Endothelial cell of umbilical vein (primary cell): ENCODE measurements at regions of chr4 and their contacts with region 1.

Region 1: GRCh38 chr4:185839194-185839712 is 27.3 kb upstream of the SORBS2 start:
- DNase-seq: peak; percentile 95
- H3K4me3 ChIP-seq: no peak overlapping the region
- H3K27ac ChIP-seq: peak overlapping the region; percentile 77
- H3K4me1 ChIP-seq: peaks cover 36% of the 10 kb centered on the region
- H3K27me3 ChIP-seq: no peaks in the 10 kb centered on the region
- CTCF ChIP-seq: no peak
- POLR2A ChIP-seq: no peak

Region 2: GRCh38 chr4:185665655-185666054 is 173.6 kb before region 1 on chr4:
- CTCF ChIA-PET with region 1: no interaction called
- POLR2A ChIA-PET with region 1: no interaction called
- dilution Hi-C with region 1: no loop called
- intact Hi-C with region 1: no loop called
- DNase-seq: no peak
- H3K4me3 ChIP-seq: no peak overlapping the region
- H3K27ac ChIP-seq: no peak overlapping the region
- H3K4me1 ChIP-seq: no peaks in the 10 kb centered on the region
- H3K27me3 ChIP-seq: no peaks in the 10 kb centered on the region
- CTCF ChIP-seq: no peak
- POLR2A ChIP-seq: no peak

Region 3: DNA sequence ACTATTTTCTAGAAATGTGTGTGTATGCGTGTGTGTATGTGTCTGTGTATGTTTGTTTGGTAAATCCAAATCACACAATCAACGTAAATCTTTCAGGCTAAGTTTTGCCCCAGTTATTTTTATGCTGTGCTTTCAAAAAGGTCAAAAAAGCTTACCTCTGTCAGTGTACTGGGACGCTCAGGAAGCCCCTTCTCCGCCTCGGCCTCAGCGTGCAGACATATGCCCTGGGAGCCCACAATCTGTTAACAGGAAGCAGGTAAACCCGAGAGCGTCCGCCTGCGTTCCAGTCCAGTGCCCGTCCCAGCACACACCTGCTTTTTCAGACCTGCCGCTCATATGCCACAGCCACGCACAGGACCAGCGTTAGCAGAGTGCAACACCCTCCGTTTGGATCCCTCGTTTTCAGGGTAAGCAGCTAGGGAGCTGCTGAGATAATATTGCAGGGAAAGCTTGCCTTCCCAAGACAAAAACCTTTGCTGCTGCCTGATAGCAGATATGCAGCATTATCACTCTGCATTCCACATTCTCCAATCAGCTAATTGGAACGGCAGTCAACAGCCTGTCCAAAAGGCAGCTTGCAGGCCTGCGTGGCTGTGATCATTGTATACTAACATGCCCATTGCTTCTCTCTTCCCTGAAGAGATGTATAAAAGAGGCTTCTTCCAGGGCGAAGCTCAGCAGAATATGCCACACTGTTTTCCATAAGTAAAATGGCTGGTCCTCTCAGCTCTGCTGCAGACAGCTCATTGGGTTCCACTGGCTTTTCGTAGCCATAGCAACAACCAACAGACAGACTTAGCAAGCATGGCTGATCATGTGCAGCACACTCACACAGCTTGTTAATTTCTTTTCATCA is 27.5 kb before region 1 on chr4 and contains the start of gene SORBS2:
- CTCF ChIA-PET with region 1: no interaction called
- POLR2A ChIA-PET with region 1: no interaction called
- dilution Hi-C with region 1: no loop called
- intact Hi-C with region 1: no loop called
- DNase-seq: no peak
- H3K4me3 ChIP-seq: no peak within 1 kb of the TSS
- H3K27ac ChIP-seq: no peak within 1 kb of the TSS
- H3K4me1 ChIP-seq: no peaks in the 10 kb centered on the region
- H3K27me3 ChIP-seq: no peaks in the 10 kb centered on the region
- CTCF ChIP-seq: no peak
- POLR2A ChIP-seq: no peak
- total RNA-seq, gene SORBS2: 75.5 and 82.5 TPM in 2 replicates

Region 4: DNA sequence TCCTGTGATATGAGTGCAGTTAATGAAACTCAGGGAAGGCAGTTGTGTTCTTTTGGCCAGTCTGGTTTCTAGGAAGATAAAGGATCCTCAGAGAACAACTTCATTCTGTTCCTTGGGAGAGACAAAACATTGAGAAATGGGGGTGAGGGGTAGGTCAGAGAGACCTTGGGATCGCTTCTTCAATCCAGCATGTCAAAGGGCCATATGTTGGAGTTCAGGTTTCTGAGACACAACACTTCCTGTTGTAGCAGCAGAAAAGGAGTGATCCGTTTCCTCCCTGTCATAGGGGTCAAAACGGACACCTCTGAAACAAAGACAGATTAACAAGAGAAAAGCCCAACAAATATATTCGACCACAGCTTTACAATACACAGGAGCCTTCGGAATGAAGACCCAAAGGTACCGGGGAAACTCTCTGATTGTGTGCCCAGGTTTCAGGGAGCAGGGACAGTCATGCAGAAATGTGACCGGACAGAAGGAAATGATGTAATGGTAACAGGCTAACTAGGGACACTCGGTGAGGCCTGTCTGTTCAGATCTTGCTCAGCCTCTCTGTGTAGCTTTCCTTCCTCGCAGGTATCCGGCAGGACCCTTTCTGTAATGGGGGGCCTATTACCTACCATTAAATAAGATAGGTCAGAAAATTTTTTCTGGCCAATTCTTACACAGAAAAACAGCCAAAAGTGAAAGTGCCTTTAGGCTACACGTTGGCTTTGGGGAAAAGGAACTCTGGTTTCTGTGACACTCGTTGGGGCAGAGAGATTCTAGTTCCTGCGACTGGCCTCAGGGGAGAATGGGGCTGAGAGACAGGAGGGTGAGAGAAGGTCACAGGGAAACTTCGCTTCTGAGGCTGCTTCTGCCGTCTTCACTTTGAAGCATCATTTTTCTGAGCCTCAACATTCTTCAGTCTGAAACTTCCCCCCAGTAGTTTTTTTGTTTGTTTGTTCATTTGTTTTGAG is 126.5 kb after region 1 on chr4:
- CTCF ChIA-PET with region 1: no interaction called
- POLR2A ChIA-PET with region 1: no interaction called
- dilution Hi-C with region 1: no loop called
- intact Hi-C with region 1: loop called (anchors 1 kb)
- DNase-seq: peak; percentile 42
- H3K4me3 ChIP-seq: no peak overlapping the region
- H3K27ac ChIP-seq: peak overlapping the region; percentile 58
- H3K4me1 ChIP-seq: peaks cover 17% of the 10 kb centered on the region
- H3K27me3 ChIP-seq: no peaks in the 10 kb centered on the region
- CTCF ChIP-seq: no peak
- POLR2A ChIP-seq: no peak

Region 5: GRCh38 chr4:186104114-186104889 is 265.0 kb after region 1 on chr4 and contains the start of gene FAM149A:
- CTCF ChIA-PET with region 1: no interaction called
- POLR2A ChIA-PET with region 1: no interaction called
- dilution Hi-C with region 1: no loop called
- intact Hi-C with region 1: no loop called
- DNase-seq: no peak
- H3K4me3 ChIP-seq: peak within 1 kb of the TSS in 2 of 3 experiments; percentile 12 to 26
- H3K27ac ChIP-seq: no peak within 1 kb of the TSS
- H3K4me1 ChIP-seq: peaks cover 3% of the 10 kb centered on the region
- H3K27me3 ChIP-seq: peaks cover 28 to 33% of the 10 kb centered on the region in 2 experiments
- CTCF ChIP-seq: no peak
- POLR2A ChIP-seq: no peak
- total RNA-seq, gene FAM149A: 0.20 and 0.51 TPM in 2 replicates